PC-3 (cell line): ENCODE measurements at regions of chr2 and their contacts with region 1.

Region 1: DNA sequence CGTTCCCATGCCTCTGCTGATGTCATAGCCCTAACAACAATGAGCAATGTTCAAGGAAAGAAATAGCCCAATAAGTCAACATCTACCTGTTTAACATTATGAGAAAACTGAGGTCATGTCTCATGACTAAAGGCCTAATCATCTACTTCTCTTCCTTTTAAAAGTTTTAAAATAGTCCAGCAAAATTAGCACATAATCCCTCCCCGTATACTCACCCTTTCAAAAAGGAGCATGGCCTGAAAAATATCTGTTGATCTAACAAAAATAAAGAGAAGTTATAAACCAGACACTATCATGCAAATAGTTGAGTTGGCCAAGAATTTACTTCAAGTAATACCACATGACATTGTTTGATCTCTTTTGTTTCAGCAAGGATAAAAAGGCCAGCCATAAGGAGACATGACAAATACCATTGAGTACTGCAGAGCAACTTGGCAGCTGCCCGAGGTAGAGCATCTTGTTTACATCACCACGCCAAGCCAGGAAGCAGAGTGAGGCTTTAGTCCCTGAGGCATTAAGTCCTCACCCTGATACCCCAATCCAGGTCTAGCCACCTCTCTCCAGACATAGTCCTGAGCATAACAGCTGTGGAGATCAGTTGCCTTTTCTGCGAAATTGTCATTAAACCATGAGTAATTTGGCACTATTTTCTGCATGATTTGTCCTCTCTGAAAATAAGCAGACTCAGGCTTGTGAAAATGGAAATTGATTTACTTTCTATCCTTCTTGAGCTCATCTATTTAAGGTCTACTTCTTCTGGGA is 137.4 kb upstream of the ETAA1 start:
- DNase-seq: peak; percentile 86
- ATAC-seq: peak; percentile 66
- H3K4me3 ChIP-seq: no peak overlapping the region
- H3K27ac ChIP-seq: peak overlapping the region; percentile 97
- H3K4me1 ChIP-seq: peaks cover 56% of the 10 kb centered on the region
- H3K27me3 ChIP-seq: no peaks in the 10 kb centered on the region
- CTCF ChIP-seq: no peak

Region 2: DNA sequence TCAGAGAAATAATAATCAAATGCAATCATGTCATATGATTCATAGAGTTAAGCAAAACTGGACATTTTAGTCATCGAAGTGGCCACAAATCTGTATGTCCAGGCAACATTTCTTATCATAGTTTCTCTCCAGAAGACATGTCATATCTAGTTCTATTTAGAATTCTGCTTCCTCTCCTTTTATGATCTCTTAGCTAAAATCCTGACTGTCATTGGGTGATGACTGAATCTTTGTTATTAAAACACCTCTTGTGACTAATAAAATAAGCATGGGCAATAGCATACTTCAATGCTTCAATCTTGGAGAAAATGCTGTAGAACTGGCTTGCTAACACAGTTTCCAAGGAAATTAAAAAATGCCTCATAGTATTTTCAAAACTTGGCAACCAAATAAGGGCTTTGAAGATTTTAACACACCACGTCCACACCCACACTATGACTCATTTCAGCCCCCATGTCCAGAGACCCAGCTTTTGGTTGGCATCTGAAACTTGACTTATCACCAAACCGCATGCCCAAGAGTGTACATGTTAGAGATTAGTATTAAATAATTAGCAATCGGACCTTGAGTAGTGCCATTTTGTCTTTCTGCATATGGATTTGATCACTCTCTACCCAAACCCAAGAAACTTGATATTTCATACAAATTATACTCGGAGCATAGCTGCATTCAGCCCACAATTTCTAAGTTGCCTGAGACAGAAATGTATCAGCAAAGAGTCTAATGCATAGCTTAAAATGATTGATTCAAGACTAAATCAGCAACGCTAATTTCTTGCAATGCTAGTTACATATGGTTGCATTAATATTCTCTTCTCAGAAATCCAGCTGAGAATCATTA is 30.9 kb after region 1 on chr2:
- CTCF ChIA-PET with region 1: no interaction called
- POLR2A ChIA-PET with region 1: interaction called, 3 read pairs
- intact Hi-C with region 1: loop called (anchors 1 kb)
- DNase-seq: peak; percentile 98
- ATAC-seq: peak; percentile 67
- H3K4me3 ChIP-seq: peak overlapping the region; percentile 26; the same call in 1 of the 2 replicates
- H3K27ac ChIP-seq: peak overlapping the region; percentile 96
- H3K4me1 ChIP-seq: peaks cover 38% of the 10 kb centered on the region
- H3K27me3 ChIP-seq: no peaks in the 10 kb centered on the region
- CTCF ChIP-seq: no peak

Region 3: DNA sequence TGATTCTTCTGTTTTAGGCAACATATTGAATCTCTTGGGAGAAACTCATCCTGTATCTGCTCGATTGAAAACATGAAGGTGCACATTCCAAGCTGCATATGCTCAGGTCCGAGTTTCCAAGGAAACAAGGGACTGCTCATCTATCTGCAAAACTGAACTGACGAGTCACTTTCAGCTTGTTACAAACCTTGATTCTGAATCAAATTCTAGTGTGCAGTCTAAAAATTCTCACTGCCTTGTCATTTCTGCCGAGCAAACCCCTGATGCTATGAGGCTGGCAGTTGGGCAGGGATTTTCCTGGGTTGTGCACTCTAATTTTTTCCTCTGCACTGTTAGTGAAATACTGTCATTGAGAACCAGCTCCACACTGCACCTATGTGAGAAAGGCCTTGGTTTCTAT is 36.1 kb after region 1 on chr2:
- CTCF ChIA-PET with region 1: no interaction called
- POLR2A ChIA-PET with region 1: interaction called, 3 read pairs
- intact Hi-C with region 1: loop called (anchors 1 kb)
- DNase-seq: peak; percentile 50
- ATAC-seq: peak; percentile 66
- H3K4me3 ChIP-seq: peak overlapping the region; percentile 33; the same call in 1 of the 2 replicates
- H3K27ac ChIP-seq: peak overlapping the region; percentile 76
- H3K4me1 ChIP-seq: peaks cover 29% of the 10 kb centered on the region
- H3K27me3 ChIP-seq: no peaks in the 10 kb centered on the region
- CTCF ChIP-seq: no peak

Region 4: GRCh38 chr2:67463810-67464209 is 204.0 kb after region 1 on chr2:
- CTCF ChIA-PET with region 1: no interaction called
- POLR2A ChIA-PET with region 1: no interaction called
- intact Hi-C with region 1: loop called (anchors 5 kb)
- DNase-seq: peak; percentile 96
- ATAC-seq: peak; percentile 88
- H3K4me3 ChIP-seq: no peak overlapping the region
- H3K27ac ChIP-seq: peak overlapping the region; percentile 94
- H3K4me1 ChIP-seq: peaks cover 34% of the 10 kb centered on the region
- H3K27me3 ChIP-seq: no peaks in the 10 kb centered on the region
- CTCF ChIP-seq: no peak